Activated naive CD4-positive, alpha-beta T cell treated with anti-CD3 and anti-CD28 coated beads, Interleukin-2, amount 10 ng/mL, durations not matched to agents 7 days and 5 days (primary cell): ENCODE measurements at regions of chr7 and their contacts with region 1.

Region 1: DNA sequence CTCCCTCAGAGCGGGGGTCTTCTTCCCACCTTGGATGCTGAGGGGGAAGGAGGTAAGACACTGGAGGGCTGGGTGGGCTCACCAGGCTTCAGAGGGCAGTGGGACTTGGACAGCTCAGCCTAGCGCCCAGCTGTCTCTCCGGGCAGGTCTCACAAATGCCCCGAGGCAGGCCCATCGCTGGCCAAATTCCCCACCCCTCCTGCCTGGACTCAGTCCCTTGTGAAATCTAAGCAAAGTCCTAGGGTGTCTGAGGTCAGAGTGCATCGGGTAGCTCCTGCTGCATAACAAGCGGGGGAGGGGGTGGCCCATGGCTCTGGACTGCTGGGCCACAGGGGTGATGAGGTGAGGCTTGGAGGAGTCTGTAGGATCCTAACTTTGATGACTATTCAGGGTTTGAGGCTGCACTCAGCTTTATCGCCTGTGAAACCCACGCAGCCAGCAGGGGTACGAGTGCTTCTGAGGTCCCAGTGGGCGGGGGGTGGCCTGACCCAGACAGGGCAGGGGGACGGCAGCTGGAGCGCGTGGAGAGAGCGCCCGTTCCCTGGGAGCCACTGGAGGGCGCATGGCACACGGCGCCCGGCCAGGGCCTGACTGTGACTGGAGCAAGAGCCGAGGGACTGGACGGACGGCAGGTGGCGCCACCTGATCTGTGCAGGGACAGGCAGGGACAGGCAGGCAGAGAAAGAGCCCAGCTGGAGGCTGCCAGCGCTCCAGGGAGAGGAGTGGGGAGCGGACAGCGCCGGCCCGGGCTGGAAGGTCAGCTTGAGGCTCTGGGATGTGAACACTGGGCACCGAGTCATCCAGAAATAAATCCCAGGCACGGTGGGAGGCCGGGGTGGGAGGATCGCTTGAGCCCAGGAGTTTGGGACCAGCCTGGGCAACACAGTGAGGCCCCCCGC is 10.0 kb downstream of the CYP2W1 start:
- DNase-seq: peak; percentile 97
- H3K4me3 Mint-ChIP-seq: no peak overlapping the region
- H3K27ac Mint-ChIP-seq: peak overlapping the region; percentile 19
- H3K4me1 Mint-ChIP-seq: no peaks in the 10 kb centered on the region
- H3K27me3 Mint-ChIP-seq: peaks cover 7% of the 10 kb centered on the region

Region 2: GRCh38 chr7:974820-975681 is 17.9 kb before region 1 on chr7 and contains the start of gene COX19:
- CTCF ChIA-PET with region 1: interaction called, 51 read pairs
- DNase-seq: peak; percentile 90
- H3K4me3 Mint-ChIP-seq: peak within 1 kb of the TSS; percentile 90
- H3K27ac Mint-ChIP-seq: peak within 1 kb of the TSS; percentile 93
- H3K4me1 Mint-ChIP-seq: peaks cover 30% of the 10 kb centered on the region
- H3K27me3 Mint-ChIP-seq: peaks cover 6% of the 10 kb centered on the region

Region 3: GRCh38 chr7:1044191-1045068 is 51.5 kb after region 1 on chr7 and contains the start of gene GPR146:
- CTCF ChIA-PET with region 1: interaction called, 43 read pairs
- DNase-seq: peak; percentile 93
- H3K4me3 Mint-ChIP-seq: peak within 1 kb of the TSS; percentile 84
- H3K27ac Mint-ChIP-seq: peak within 1 kb of the TSS; percentile 86
- H3K4me1 Mint-ChIP-seq: peaks cover 69% of the 10 kb centered on the region
- H3K27me3 Mint-ChIP-seq: no peaks in the 10 kb centered on the region

Region 4: DNA sequence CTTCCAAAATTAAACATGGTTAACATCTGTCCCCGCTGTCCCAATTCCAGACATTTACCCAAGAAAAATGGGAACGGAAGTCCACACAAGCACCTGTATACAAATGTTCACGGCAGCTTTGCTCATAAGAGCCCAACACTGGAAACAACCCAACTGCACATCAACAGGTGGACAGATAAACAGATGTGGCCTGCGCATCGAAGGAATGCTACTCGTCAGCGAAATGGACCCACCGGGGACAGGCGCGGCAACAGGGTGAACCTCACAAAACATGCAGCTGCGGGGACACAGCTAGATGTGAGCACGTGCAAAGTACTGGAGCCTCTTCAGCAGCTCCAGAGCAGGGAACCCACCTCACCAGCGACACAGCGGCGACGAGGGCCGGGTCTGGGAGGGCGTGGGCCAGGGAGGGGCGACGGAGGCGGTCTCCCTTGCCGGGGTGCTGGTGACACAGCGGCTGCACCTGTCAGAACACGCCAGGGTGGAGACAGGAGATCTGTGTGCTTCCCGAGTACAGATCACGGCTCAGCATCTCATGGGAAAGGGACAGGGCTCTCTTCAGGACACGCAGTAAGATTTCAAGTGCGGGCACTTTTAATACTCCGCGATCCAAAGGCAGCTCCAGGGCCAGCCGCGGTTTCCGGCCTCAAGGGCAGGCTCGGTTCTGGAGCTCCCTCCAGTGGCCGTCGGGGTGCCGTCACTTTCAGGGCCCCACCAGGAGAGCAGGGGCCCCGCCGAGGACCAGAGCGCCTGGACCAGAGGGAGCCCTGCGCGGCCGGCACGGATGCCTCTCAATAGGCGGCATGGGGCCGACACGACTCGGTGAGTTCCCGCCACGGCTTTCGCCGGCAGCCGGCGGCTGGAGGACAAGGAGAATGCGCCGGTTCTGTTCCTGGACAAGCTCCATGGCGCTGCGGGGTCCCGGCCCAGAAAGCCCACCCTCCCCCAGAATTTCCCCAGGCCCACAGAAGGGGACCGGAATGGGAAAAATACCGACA is 72.6 kb after region 1 on chr7:
- CTCF ChIA-PET with region 1: interaction called, 247 read pairs
- DNase-seq: peak; percentile 91
- H3K4me3 Mint-ChIP-seq: peak overlapping the region; percentile 28
- H3K27ac Mint-ChIP-seq: no peak overlapping the region
- H3K4me1 Mint-ChIP-seq: peaks cover 7% of the 10 kb centered on the region
- H3K27me3 Mint-ChIP-seq: peaks cover 26% of the 10 kb centered on the region

Region 5: GRCh38 chr7:1086588-1087464 is 93.9 kb after region 1 on chr7:
- CTCF ChIA-PET with region 1: interaction called, 16 read pairs
- DNase-seq: peak; percentile 82
- H3K4me3 Mint-ChIP-seq: peak overlapping the region; percentile 64
- H3K27ac Mint-ChIP-seq: no peak overlapping the region
- H3K4me1 Mint-ChIP-seq: peaks cover 13% of the 10 kb centered on the region
- H3K27me3 Mint-ChIP-seq: peaks cover 5% of the 10 kb centered on the region

Region 6: GRCh38 chr7:1159891-1160668 is 167.1 kb after region 1 on chr7 and contains the start of gene ZFAND2A:
- CTCF ChIA-PET with region 1: interaction called, 12 read pairs
- DNase-seq: peak; percentile 99
- H3K4me3 Mint-ChIP-seq: peak within 1 kb of the TSS; percentile 85
- H3K27ac Mint-ChIP-seq: peak within 1 kb of the TSS; percentile 90
- H3K4me1 Mint-ChIP-seq: peaks cover 27% of the 10 kb centered on the region
- H3K27me3 Mint-ChIP-seq: no peaks in the 10 kb centered on the region

Region 7: DNA sequence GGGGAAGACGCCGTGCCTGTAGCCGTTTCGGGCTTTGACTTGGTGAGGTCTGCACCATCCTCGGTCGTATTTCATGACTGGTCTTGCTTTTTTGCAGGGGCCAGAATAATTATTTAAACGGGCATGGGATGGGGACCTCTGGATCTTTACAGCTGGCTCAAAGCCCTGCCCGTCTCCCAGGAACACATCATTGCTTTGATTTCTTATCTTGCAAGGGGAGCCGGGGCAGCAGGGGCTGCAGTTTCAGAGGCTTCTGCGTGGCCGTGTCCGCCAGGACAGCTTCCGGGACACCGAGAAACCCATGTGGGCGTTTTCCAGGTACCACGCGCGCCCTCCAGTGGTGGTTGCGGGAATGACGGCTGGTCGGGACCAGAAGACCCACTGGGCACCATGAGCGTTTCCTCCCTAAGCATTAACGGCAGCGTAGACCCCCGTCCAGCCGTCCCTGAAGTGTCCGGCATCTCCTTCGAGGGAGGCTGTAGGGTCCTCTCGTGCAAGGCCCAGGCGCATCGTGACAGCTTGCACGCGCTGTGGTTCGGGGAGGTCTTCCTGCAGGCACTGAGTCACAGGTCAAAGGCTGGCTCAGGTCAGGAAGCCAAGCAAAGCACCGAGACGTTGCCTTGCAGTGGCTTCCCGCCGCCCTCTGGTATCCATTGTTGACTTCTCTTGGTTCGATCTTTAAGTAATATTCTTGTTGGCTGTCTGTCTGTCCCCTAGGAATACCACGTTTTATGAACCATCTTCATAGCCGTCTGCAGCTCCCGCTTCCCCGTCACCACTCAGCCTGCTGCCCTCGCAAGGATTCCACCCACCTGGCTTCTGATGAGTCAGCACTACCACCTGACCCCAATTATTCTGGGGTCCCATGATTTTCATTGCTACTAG is 183.3 kb after region 1 on chr7:
- CTCF ChIA-PET with region 1: interaction called, 44 read pairs
- DNase-seq: peak; percentile 88
- H3K4me3 Mint-ChIP-seq: peak overlapping the region; percentile 31
- H3K27ac Mint-ChIP-seq: peak overlapping the region; percentile 80
- H3K4me1 Mint-ChIP-seq: peaks cover 17% of the 10 kb centered on the region
- H3K27me3 Mint-ChIP-seq: peaks cover 26% of the 10 kb centered on the region